HEK293T (cell line): ENCODE measurements at regions of chr5 and their contacts with region 1.

Region 1: DNA sequence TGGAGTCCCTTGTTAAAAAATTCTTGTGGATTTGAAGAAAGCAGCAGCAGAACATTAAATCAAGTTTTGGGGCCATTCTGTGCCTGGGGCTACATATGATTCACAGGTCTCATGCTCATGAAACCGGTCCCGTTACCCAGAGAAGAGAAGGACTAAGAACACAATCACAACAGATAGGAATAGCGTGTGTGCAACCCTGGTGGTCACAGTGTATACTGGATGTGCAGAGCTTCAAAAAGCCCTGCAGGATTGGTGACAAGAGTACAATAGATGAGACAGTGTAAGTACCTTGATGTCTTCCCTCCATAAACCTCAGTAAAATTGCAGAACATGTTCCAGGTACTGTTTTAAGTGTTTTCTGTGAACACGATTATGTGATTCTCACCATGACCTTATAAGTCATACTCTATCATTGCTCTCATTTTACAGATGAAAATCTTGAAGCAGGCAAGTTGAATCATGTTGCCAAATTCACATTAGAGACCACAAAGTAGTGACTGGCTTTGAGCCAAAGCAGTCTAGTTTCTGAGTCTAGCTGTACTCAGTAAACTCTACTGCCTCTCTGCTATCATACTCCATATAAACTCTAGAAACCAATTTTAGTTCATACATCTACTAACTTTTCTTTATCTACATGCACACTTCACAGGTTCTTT is 636.6 kb downstream of the TAF11L14 start:
- DNase-seq: no peak

Region 2: DNA sequence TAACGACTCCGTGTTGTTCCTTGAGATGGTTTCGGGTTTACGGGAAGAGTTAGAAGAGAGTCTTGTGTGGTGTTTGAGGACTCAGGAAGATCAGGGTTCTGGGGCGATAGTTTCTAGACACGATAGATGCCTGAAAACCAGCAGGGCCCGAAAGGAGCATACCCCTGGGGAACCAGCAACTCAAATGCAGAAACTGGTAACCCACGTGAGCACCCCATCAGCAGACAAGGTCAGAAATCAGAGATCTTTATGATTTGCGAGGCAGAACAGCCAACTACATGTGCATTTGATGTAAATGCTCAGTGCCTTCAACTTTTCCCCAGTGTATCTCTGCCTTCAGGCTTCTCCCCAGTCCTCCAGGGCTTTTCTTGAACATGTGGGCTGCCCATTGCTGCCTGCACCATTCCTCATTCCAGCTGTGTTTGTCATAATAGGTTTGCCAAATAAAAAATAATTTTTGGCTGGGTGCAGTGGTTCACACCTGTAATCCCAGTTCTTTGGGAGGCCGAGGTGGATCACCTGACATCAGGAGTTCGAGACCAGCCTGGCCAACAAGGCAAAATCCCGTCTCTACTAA is 978.3 kb before region 1 on chr5:
- CTCF ChIA-PET with region 1: interaction called, 11 read pairs
- POLR2A ChIA-PET with region 1: no interaction called
- DNase-seq: no peak

Region 3: GRCh38 chr5:18329328-18329727 is 58.5 kb after region 1 on chr5:
- CTCF ChIA-PET with region 1: no interaction called
- POLR2A ChIA-PET with region 1: no interaction called
- DNase-seq: no peak